Activated CD8-positive, alpha-beta T cell treated with anti-CD3 and anti-CD28 coated beads for 36 hours (primary cell): ENCODE measurements at regions of chr3 and their contacts with region 1.

Region 1: DNA sequence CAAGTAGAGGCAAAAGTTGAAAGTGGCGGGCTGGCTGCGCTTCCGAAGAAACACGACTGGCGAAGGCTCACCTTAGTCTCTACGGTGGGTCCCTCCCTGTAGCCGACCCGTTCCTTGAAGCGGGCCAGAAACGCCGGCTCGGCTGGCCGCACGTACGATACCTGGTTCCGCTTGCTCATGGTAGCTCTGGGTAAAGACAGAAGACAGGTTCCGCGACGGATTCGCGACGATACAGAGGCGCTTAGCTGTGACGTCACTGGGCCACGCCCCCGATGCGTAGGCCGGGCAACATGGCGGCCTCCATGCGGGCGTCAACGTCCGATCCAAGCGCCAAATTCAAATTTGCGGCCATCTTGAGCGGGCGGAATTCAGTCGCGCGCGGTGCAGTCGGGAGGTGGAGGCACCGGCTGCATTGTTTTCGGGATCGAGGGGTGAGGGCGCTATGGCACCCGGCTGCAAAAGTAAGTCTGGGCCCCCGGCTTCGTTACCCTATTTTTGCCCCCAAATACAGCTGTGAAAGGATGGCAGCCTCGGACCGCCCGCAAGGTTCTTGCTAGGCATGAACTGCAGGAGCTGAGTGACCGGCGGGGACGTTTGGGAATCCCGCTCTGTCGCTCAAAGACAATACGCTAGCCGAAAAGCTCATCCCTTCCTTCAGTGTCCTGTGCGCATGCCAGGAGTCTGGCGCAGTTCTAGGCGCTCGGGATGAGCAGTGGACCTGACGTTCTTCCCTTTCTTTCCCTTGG is at the starts of genes KIAA1143 and KIF15:
- DNase-seq: peak; percentile 99
- ATAC-seq: peak; percentile 93
- H3K4me3 Mint-ChIP-seq: peak within 1 kb of the TSS; percentile 96
- H3K27ac Mint-ChIP-seq: peak within 1 kb of the TSS; percentile 92
- H3K4me1 Mint-ChIP-seq: peaks cover 27% of the 10 kb centered on the region
- H3K27me3 Mint-ChIP-seq: no peaks in the 10 kb centered on the region
- CTCF ChIP-seq: no peak
- total RNA-seq, gene KIAA1143: 36.6 to 39.1 TPM
- total RNA-seq, gene KIF15: 38.1 to 41.9 TPM

Region 2: GRCh38 chr3:44554626-44555592 is 206.7 kb before region 1 on chr3 and contains the start of gene ZKSCAN7:
- CTCF ChIA-PET with region 1: no interaction called
- POLR2A ChIA-PET with region 1: interaction called, 10 read pairs
- intact Hi-C with region 1: no loop called
- DNase-seq: peak; percentile 77
- ATAC-seq: peak; percentile 82
- H3K4me3 Mint-ChIP-seq: peak within 1 kb of the TSS; percentile 77
- H3K27ac Mint-ChIP-seq: peak within 1 kb of the TSS; percentile 88
- H3K4me1 Mint-ChIP-seq: peaks cover 19% of the 10 kb centered on the region
- H3K27me3 Mint-ChIP-seq: peaks cover 2% of the 10 kb centered on the region
- CTCF ChIP-seq: no peak
- total RNA-seq, gene ZKSCAN7: 4.0 to 4.7 TPM